ENCODE measurements at regions of chr9 and their contacts with region 1.

Region 1: GRCh38 chr9:122338994-122339393 is 31.8 kb upstream of the PTGS1 start:
- DNase-seq: no peak
- H3K4me3 ChIP-seq: no peak overlapping the region
- H3K4me3 Mint-ChIP-seq: no peak overlapping the region
- H3K27ac Mint-ChIP-seq: no peak overlapping the region
- H3K4me1 ChIP-seq: no peaks in the 10 kb centered on the region
- H3K4me1 Mint-ChIP-seq: no peaks in the 10 kb centered on the region
- H3K27me3 ChIP-seq: no peaks in the 10 kb centered on the region
- H3K27me3 Mint-ChIP-seq: peaks cover 5% of the 10 kb centered on the region
- CTCF ChIP-seq: no peak

Region 2: DNA sequence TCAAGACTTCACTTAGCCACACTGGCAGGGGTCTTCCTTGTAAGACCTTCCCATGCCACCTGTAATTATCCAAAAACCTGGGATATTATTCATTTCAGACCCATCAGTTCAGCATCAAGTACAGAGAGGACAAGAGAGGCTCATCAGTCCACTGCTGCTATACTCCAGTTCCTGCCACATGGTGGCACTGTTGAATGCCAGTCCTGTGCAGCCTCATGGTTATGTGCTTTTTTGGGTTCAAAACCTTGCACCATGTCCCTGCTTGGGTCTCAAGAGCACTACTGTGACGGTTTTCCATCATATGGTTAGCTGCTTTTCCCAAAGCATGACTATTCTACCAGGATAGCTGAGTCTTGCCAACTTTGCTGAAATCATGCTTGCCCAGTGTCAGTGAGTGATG is 40.3 kb after region 1 on chr9:
- CTCF ChIA-PET with region 1: no interaction called
- POLR2A ChIA-PET with region 1: no interaction called
- intact Hi-C with region 1: no loop called
- DNase-seq: no peak
- H3K4me3 ChIP-seq: no peak overlapping the region
- H3K4me3 Mint-ChIP-seq: no peak overlapping the region
- H3K27ac Mint-ChIP-seq: no peak overlapping the region
- H3K4me1 ChIP-seq: no peaks in the 10 kb centered on the region
- H3K4me1 Mint-ChIP-seq: no peaks in the 10 kb centered on the region
- H3K27me3 ChIP-seq: no peaks in the 10 kb centered on the region
- H3K27me3 Mint-ChIP-seq: peaks cover 7% of the 10 kb centered on the region
- CTCF ChIP-seq: peak in 1 of 2 experiments; percentile 10

Region 3: GRCh38 chr9:124329206-124329792 is 1990.3 kb after region 1 on chr9:
- CTCF ChIA-PET with region 1: no interaction called
- POLR2A ChIA-PET with region 1: no interaction called
- intact Hi-C with region 1: loop called (anchors 5 kb)
- DNase-seq: no peak
- H3K4me3 ChIP-seq: no peak overlapping the region
- H3K4me3 Mint-ChIP-seq: no peak overlapping the region
- H3K27ac Mint-ChIP-seq: no peak overlapping the region
- H3K4me1 ChIP-seq: no peaks in the 10 kb centered on the region
- H3K4me1 Mint-ChIP-seq: no peaks in the 10 kb centered on the region
- H3K27me3 ChIP-seq: no peaks in the 10 kb centered on the region
- H3K27me3 Mint-ChIP-seq: no peaks in the 10 kb centered on the region
- CTCF ChIP-seq: no peak

Measured in Caco-2 (cell line).